ENCODE measurements at regions of chr11 and their contacts with region 1.

Region 1: DNA sequence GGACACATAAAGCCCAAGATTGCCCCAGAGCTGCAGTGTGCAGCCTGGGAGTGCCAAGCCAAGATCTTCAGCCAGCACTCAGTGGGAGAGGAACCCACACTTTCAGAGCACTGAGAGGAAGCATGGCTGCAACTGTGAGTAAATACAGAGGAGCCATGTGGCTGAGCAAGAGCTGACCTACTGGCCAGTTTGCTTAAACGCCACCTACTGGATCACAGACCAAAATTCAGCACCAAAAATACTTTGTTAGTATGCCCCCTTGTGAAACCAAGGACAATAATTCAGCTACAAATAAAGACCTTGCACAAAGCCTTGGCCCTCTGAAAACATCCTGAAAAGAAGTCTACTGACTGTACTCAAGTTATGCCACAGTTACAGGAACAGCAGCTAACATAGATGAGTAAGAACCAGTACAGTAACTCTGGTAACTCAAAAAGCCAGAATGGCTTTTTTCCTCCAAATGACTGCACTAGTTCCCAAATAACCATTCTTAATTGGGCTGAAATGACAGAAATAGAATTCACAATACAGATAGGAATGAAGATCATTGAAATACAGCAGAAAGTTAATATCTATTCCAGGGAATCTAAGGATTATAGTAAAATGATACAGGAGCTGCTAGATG is 10.1 kb upstream of the OR4A15 start:
- DNase-seq: no peak
- CTCF ChIP-seq: no peak

Region 2: GRCh38 chr11:55457641-55458040 is 100.0 kb after region 1 on chr11:
- in situ Hi-C with region 1: loop called (anchors 25 kb)
- DNase-seq: no peak
- CTCF ChIP-seq: no peak

Region 3: GRCh38 chr11:56307836-56308235 is 950.2 kb after region 1 on chr11:
- in situ Hi-C with region 1: no loop called
- DNase-seq: no peak
- CTCF ChIP-seq: no peak